Cardiac septum (tissue), 1 donor: ENCODE measurements at regions of chr3 and their contacts with region 1.

Region 1: DNA sequence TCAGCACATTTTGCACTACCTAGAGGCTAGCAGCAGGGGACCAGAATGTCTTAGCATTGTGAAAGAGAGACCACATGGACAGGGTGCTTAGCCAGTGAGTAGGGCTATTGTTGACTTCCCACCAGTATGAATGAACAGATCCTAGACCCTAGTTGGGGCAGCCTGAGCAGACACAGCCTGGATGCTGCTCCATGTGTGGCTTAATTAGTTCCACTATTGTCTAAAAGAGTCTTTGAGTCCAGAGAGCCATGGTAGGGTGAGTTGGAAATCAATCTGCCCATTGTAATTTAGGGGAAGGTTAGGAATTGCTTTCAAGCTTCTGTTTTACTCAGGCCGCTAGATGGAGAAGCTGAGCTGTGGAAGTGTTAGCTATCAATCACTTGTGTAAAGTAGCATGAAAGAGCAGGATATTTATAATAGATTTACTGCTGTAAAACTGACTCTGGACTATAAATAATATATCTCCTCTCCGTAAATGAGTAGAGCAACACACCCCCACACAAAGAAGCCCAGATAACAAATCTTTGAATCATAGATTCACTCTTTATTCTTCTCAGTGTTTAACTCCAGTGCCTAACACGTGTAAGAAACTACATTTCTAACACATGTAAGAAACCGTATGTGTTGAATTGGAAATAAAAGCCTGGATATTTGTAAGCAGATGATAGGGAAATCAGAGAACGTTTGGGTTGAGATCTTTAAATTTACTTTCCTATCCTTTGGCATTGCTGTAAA is 4.1 kb upstream of the GCSAM start:
- DNase-seq: no peak

Region 2: GRCh38 chr3:111989061-111989678 is 148.0 kb before region 1 on chr3:
- intact Hi-C with region 1: no loop called
- DNase-seq: no peak

Region 3: GRCh38 chr3:112531358-112531781 is 394.2 kb after region 1 on chr3:
- intact Hi-C with region 1: loop called (anchors 10 kb)
- DNase-seq: no peak